ENCODE measurements at regions of chr1 and their contacts with region 1.

Region 1: GRCh38 chr1:161374373-161374772 is 6.7 kb upstream of the CFAP126 start:
- H3K4me3 Mint-ChIP-seq: no peak overlapping the region
- H3K27ac Mint-ChIP-seq: no peak overlapping the region
- H3K4me1 Mint-ChIP-seq: no peaks in the 10 kb centered on the region
- H3K27me3 Mint-ChIP-seq: no peaks in the 10 kb centered on the region

Region 2: DNA sequence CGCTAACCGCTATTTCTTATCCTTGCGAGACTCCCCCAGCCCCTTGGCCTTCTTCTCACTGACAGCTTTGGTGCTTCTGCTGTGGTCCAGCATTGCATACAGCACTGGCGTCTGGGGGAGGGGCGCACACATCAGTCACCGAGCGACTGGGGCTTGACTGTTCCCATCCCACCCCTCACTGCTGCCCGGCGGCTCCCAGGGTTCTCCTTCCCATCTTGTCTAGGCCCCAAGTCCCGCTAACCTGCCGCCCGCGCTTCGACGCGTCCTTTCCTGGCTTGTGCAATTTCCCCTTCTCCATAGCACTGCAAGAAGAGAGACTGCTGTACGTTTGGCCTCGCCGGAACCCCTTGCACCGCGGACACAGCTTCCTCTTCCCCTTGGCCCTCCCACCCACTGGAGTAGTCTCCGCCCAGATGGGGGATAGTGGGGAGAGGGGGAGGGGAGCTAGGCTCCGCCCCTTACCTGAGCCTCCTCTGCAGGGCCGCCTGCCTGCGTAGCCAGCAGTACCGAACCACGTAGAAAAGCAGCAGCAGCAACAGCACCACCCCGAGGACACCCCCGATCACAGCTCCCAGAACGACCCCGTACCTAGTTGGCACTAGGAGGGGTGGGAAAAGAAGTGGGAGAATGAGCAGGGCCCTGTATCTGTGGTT is 68.4 kb before region 1 on chr1:
- intact Hi-C with region 1: loop called (anchors 10 kb)
- H3K4me3 Mint-ChIP-seq: peak overlapping the region; percentile 85
- H3K27ac Mint-ChIP-seq: peak overlapping the region; percentile 92
- H3K4me1 Mint-ChIP-seq: peaks cover 53% of the 10 kb centered on the region
- H3K27me3 Mint-ChIP-seq: no peaks in the 10 kb centered on the region

Region 3: DNA sequence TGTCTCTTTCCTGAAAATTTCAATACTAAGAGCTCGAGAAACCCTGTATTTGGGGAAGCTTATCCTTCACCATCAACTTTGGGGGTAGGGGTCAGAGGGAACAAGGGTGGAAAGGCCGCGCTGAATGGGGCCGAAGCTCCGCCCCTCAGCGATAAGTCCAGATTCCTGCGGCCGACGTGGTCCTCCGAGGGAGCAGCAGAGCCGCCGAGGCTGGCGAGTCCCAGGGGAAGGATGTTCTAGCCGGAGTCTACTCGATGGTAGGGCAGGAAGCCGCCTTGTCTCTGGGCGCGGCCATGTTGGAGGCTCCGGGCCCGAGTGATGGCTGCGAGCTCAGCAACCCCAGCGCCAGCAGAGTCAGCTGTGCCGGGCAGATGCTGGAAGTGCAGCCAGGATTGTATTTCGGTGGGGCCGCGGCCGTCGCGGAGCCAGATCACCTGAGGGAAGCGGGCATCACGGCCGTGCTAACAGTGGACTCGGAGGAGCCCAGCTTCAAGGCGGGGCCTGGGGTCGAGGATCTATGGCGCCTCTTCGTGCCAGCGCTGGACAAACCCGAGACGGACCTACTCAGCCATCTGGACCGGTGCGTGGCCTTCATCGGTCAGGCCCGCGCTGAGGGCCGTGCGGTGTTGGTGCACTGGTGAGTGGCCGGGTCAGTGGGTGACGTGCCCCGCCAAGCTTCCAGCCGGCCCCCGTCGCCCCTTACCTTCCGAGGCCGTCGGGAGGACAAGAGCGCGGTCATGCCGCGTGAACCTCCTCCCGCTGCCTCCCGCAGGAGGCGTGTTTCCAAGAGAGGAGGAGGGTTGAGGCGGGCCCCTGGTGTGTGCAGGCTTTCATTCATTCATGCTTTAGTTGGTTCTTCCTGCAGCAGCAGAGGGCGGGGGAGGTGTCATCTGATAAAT is 375.4 kb after region 1 on chr1 and contains the start of gene DUSP12:
- intact Hi-C with region 1: loop called (anchors 10 kb)
- H3K4me3 Mint-ChIP-seq: peak within 1 kb of the TSS; percentile 99
- H3K27ac Mint-ChIP-seq: peak within 1 kb of the TSS; percentile 93
- H3K4me1 Mint-ChIP-seq: peaks cover 40% of the 10 kb centered on the region
- H3K27me3 Mint-ChIP-seq: peaks cover 16% of the 10 kb centered on the region